Activated T-helper 1 cell treated with anti-CD3 and anti-CD28 coated beads, Interleukin-12 subunit alpha, Interleukin-12 subunit beta, Interleukin-2, Interleukin-4 antibody, amounts not matched to agents 30 ng/mL and 10 ng/mL and 1 ng/mL, durations not matched to agents 14 hours and 24 hours and 36 hours (primary cell): ENCODE measurements at regions of chr17 and their contacts with region 1.

Region 1: DNA sequence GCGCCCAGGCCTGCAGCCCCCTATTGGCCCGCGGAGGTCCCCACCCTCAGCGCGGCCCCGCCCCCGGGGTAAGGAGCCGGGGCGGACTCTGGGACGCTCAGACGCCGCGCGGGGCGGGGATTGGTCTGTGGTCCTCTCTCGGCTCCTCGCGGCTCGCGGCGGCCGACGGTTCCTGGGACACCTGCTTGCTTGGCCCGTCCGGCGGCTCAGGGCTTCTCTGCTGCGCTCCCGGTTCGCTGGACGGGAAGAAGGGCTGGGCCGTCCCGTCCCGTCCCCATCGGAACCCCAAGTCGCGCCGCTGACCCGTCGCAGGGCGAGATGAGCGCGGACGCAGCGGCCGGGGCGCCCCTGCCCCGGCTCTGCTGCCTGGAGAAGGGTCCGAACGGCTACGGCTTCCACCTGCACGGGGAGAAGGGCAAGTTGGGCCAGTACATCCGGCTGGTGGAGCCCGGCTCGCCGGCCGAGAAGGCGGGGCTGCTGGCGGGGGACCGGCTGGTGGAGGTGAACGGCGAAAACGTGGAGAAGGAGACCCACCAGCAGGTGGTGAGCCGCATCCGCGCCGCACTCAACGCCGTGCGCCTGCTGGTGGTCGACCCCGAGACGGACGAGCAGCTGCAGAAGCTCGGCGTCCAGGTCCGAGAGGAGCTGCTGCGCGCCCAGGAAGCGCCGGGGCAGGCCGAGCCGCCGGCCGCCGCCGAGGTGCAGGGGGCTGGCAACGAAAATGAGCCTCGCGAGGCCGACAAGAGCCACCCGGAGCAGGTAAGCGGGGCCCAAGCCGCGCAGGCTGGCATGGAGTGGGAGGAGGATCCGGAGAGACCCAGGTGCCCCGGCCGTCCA is at the start of gene NHERF1:
- DNase-seq: peak; percentile 95
- H3K4me3 Mint-ChIP-seq: peak within 1 kb of the TSS; percentile 95
- H3K27ac Mint-ChIP-seq: peak within 1 kb of the TSS; percentile 91
- H3K4me1 Mint-ChIP-seq: peaks cover 70% of the 10 kb centered on the region
- H3K27me3 Mint-ChIP-seq: no peaks in the 10 kb centered on the region
- total RNA-seq, gene NHERF1: 142 and 153 TPM in 2 replicates

Region 2: GRCh38 chr17:74759243-74759801 is 10.6 kb after region 1 on chr17:
- intact Hi-C with region 1: loop called (anchors 1 kb)
- DNase-seq: peak; percentile 57
- H3K4me3 Mint-ChIP-seq: peak overlapping the region; percentile 75
- H3K27ac Mint-ChIP-seq: peak overlapping the region; percentile 68
- H3K4me1 Mint-ChIP-seq: peaks cover 54% of the 10 kb centered on the region
- H3K27me3 Mint-ChIP-seq: no peaks in the 10 kb centered on the region

Region 3: GRCh38 chr17:74776044-74776977 is 27.6 kb after region 1 on chr17 and contains the start of gene NAT9:
- intact Hi-C with region 1: loop called (anchors 1 kb)
- DNase-seq: peak; percentile 99
- H3K4me3 Mint-ChIP-seq: peak within 1 kb of the TSS; percentile 99
- H3K27ac Mint-ChIP-seq: peak within 1 kb of the TSS; percentile 91
- H3K4me1 Mint-ChIP-seq: peaks cover 70% of the 10 kb centered on the region
- H3K27me3 Mint-ChIP-seq: no peaks in the 10 kb centered on the region
- total RNA-seq, gene NAT9: 69.0 and 70.8 TPM in 2 replicates

Region 4: DNA sequence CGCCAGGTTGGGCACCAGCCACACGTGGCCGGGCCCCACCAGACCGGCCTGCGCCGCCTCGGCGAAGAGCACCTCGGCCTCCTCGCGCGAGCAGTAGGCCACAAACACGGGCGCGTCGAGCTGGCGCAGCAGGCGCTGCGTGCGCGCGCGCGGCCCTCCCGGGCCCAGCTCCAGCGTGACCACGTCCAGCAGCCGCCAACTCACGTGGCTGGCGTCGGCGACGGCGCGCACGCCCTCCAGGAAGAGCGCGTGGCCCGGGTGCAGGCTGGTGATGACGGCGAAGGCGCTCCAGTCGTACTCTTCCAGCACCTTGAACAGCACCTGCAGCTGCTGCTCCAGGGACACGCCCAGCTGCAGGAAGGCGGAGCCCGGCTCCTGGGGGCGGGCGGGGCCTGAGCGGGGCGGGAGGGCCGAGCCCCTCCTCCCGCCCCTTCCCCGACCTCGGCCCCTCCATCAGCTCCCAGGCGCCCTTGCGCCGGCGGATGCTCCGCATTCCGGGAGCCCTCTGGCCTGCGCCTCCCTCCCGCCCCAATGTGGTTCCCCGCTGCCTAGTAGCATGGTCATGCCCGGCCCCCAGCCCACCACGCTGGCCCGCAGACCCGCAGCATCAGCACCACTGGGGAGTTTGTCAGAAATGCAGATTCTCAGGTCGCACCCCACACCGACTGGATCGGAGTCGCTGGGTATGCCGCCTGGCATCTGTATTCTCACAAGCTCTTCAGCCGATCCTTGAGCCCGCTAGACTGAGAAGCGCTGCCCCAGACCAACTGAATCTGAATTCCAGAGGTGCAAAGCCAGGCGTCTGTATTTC is 103.7 kb after region 1 on chr17:
- intact Hi-C with region 1: loop called (anchors 2 kb)
- DNase-seq: peak; percentile 72
- H3K4me3 Mint-ChIP-seq: peak overlapping the region; percentile 86
- H3K27ac Mint-ChIP-seq: peak overlapping the region; percentile 52
- H3K4me1 Mint-ChIP-seq: peaks cover 11% of the 10 kb centered on the region
- H3K27me3 Mint-ChIP-seq: peaks cover 19% of the 10 kb centered on the region

Region 5: DNA sequence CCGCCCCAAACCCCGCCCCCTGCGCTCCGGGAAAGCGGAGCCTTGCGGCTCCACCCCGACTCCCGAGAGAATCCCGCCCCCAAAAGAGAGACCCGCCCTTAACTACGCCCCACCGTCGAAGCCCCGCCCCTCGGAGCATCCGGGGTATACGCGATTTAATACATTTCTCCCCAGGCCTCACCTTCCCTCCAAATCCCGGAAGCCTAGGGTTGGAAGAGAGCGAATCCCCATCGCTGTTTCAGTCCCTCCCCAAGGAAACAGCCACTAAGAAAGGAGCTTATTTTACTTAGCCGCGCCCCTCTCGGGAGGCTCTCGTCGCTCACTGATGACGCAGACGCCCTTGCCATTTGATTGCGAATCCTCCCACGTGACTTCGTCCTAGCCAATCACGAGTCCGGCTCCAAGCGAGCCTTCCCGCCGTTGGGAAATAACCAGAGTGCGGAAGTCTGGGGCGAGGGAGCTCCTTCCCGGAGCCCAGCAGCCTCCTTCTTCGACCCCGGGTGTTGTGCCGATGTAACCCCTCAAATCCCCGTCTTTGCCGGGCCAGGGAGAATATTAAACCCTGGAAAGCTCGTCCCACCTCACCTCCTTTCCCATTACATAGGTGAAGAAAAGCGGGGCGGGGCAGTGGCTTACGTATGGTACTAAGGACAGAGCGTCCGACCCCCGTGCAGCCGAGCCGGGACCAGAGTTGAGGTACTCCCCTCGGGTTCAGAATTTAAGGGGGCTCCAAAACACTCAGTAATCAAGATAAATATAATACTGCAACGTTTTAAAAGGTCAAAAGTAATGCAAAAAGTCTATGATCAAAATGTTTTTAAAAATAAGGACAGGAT is 124.5 kb after region 1 on chr17:
- intact Hi-C with region 1: loop called (anchors 1 kb)
- DNase-seq: peak; percentile 98
- H3K4me3 Mint-ChIP-seq: peak overlapping the region; percentile 89
- H3K27ac Mint-ChIP-seq: peak overlapping the region; percentile 87
- H3K4me1 Mint-ChIP-seq: peaks cover 31% of the 10 kb centered on the region
- H3K27me3 Mint-ChIP-seq: peaks cover 5% of the 10 kb centered on the region

Region 6: DNA sequence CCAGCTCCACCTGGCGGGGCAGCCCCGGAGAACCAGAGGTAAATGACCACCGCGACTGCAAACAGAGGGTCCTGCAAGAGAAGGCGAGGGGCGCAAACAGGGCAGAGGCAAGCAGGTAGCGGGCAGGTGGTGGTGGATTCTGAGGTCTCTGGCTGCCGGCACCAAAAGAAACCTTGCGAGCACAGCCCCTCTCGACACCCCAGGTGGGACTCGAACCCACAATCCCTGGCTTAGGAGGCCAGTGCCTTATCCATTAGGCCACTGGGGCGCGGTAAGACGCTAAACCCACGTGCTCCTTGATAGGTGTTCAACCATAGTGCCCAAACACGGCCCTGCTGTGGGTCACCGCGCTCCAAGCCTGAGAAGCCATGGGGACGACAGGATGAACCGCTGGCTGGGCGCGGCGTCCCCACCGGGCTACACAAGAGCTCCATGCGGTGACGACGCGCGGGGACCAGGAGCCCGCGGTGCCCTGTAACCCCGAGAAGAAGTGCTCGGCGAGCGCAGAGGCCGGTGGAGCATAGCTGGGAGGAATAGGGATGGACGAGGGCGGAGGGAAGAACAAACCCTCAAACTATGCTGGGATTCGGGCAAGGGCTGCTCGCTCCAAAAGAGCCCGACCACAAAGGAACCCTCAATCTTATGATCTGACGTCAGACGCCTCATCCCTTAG is 285.6 kb after region 1 on chr17:
- intact Hi-C with region 1: loop called (anchors 10 kb)
- DNase-seq: peak; percentile 79
- H3K4me3 Mint-ChIP-seq: peak overlapping the region; percentile 93
- H3K27ac Mint-ChIP-seq: peak overlapping the region; percentile 94
- H3K4me1 Mint-ChIP-seq: peaks cover 52% of the 10 kb centered on the region
- H3K27me3 Mint-ChIP-seq: peaks cover 10% of the 10 kb centered on the region